ENCODE measurements at regions of chr11 and their contacts with region 1.

Region 1: DNA sequence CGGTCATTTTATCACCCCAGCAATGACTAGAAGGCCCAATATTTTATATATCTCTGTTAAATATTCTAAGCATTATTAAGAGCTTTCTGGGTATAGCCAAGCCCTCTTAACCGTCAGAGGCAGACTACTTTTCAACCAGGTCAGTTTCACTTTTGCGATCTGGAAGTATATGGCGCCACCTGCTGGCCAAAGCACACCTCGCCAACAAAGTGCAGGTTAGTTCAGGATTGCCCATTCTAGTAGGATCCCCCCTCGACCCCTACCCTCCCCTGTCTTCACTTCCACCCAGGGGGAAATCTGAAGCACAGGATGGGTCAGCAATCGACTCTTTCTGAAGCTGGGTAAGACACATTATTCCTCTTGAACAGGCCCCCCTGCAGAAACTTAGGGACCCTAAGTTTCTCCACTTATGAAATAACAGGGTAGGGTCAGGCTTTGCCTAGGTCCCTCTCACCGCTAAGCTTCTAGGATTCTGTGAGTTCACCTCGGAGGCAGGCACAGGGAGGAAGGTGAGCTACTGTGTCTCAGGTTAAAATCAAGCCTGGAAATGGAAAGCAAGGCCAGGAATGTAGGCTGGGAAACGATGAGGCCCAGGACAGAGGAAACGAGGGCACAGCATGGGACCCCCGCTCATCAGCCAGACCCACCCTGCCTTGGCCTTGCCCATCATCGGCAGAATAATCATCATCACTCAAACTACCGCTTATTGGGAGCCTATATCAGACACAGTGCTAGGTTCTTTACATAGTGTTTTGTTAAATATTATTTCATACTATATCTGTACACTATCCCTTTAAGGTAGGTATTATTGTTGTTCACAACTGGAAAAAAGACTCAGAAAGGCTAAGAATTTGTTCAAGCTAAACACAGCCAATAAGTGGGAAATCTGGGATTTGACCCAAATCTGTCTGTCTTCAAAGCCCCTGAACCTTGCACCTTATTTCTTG is 35.6 kb downstream of the KCNJ1 start:
- DNase-seq: peak; percentile 58
- H3K4me3 ChIP-seq: no peak overlapping the region
- H3K27ac ChIP-seq: peak overlapping the region; percentile 26
- H3K4me1 ChIP-seq: peaks cover 6% of the 10 kb centered on the region
- H3K27me3 ChIP-seq: no peaks in the 10 kb centered on the region
- CTCF ChIP-seq: peak; percentile 76 to 85

Region 2: DNA sequence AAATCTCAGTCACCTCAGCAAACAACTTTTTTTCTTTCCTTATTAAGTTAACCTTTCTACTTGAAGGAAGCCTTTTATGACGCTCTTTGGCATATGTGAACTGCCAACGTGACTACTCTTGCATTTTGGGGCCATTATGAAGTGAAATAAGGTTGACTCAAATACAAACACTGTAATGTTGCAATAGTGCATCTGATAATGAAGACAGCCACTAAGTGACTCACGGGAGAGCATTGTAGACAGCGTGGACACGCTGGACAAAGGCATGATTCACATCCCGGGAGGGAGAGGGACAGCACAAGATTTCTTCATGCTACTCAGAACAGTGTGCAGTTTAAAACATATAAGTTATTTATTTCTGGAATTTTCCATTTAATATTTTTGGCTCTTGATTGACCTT is 804.9 kb before region 1 on chr11:
- CTCF ChIA-PET with region 1: no interaction called
- dilution Hi-C with region 1: no loop called
- in situ Hi-C with region 1: loop called (anchors 10 kb)
- intact Hi-C with region 1: loop called (anchors 1 kb)
- DNase-seq: peak; percentile 99
- H3K4me3 ChIP-seq: no peak overlapping the region
- H3K27ac ChIP-seq: peak overlapping the region; percentile 87
- H3K4me1 ChIP-seq: peaks cover 31% of the 10 kb centered on the region
- H3K27me3 ChIP-seq: no peaks in the 10 kb centered on the region
- CTCF ChIP-seq: no peak

Region 3: GRCh38 chr11:128164080-128164741 is 667.2 kb before region 1 on chr11:
- CTCF ChIA-PET with region 1: no interaction called
- dilution Hi-C with region 1: loop called (anchors 25 kb)
- in situ Hi-C with region 1: loop called in 1 of 2 experiments (anchors 10 kb)
- intact Hi-C with region 1: no loop called
- DNase-seq: no peak
- H3K4me3 ChIP-seq: no peak overlapping the region
- H3K27ac ChIP-seq: no peak overlapping the region
- H3K4me1 ChIP-seq: no peaks in the 10 kb centered on the region
- H3K27me3 ChIP-seq: no peaks in the 10 kb centered on the region
- CTCF ChIP-seq: no peak

Region 4: GRCh38 chr11:128290106-128290840 is 541.2 kb before region 1 on chr11:
- CTCF ChIA-PET with region 1: no interaction called
- dilution Hi-C with region 1: no loop called
- in situ Hi-C with region 1: loop called in 1 of 2 experiments (anchors 10 kb)
- intact Hi-C with region 1: loop called (anchors 1 kb)
- DNase-seq: peak; percentile 45
- H3K4me3 ChIP-seq: no peak overlapping the region
- H3K27ac ChIP-seq: no peak overlapping the region
- H3K4me1 ChIP-seq: peaks cover 4% of the 10 kb centered on the region
- H3K27me3 ChIP-seq: no peaks in the 10 kb centered on the region
- CTCF ChIP-seq: peak; percentile 79 to 86

Region 5: DNA sequence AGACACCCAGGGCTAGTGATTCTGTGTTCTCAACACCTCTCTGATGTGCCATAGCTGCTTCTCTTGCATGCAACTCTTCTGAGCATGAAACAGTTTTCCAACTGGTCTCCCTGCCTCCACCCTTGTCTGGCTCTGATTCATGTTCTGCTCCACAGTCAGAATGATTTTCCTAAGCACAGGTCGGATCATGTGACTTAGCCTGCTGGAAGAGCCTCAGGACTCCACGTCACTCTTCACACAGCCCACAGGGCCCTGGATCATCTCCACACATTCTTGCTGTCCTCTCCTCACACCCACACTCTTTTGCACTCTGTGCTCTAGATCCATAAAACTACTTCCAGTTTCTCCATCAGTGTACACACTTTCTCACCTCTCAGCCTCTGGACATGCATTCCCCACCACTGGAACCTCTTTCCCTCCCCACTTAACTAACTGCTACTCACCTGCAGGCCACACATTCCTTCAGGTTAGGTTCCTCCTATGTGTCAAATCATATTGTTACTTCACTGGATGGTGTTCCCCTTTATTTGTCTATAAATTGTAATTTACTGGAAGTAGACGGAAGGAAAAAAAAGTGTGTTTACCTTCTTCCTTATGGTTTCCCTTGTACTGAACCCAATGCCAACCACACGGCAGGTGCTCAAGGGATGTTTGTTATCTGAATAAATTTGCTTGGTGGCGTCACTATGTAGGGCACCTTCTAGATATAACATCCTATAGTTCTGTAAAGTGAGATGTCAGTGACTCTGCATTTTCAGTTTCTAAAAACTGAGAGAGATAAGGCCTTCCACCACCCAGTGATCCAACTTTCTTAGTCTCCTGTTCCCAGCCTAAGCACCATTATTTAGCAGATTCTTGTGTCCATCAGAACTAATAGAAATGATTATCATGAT is 377.8 kb before region 1 on chr11:
- CTCF ChIA-PET with region 1: no interaction called
- dilution Hi-C with region 1: no loop called
- in situ Hi-C with region 1: no loop called
- intact Hi-C with region 1: loop called (anchors 10 kb)
- DNase-seq: peak; percentile 94
- H3K4me3 ChIP-seq: no peak overlapping the region
- H3K27ac ChIP-seq: peak overlapping the region; percentile 67
- H3K4me1 ChIP-seq: peaks cover 56% of the 10 kb centered on the region
- H3K27me3 ChIP-seq: no peaks in the 10 kb centered on the region
- CTCF ChIP-seq: no peak

Region 6: DNA sequence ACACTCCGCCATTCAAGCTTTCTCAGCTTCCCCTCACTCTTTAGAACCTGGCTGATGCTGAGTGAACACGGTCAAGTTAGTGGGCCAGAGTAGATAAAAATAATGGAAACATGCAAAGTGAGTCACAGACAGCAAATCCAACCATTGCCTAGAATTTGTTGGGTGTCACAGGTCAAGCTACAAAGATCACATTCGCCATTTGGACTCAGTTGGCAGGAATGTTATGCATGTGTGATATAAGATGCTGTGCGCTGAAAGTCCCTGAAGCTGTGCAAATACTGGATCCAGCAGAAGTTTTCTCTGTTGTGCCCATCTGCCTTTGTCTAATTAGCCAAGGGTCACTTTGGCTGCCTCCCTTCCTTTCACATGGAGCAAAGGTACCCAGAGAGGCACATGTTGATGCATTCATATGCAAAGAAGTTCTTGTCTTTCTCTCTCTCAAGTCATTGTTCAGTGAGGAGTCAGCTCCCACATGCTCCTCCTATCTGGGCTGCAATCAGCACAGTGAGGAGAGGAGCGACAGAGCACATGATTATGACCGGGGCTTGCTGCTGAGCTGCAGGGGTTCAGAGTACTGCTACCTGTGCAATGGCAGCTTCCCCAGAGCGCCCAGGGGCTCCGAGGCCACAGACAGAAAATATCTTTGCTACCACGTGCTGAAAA is 97.9 kb before region 1 on chr11:
- CTCF ChIA-PET with region 1: no interaction called
- dilution Hi-C with region 1: no loop called
- in situ Hi-C with region 1: no loop called
- intact Hi-C with region 1: no loop called
- DNase-seq: no peak
- H3K4me3 ChIP-seq: no peak overlapping the region
- H3K27ac ChIP-seq: no peak overlapping the region
- H3K4me1 ChIP-seq: no peaks in the 10 kb centered on the region
- H3K27me3 ChIP-seq: no peaks in the 10 kb centered on the region
- CTCF ChIP-seq: no peak

Measured in mammary epithelial cell (primary cell).